ENCODE measurements at regions of chr15 and their contacts with region 1.

Region 1: DNA sequence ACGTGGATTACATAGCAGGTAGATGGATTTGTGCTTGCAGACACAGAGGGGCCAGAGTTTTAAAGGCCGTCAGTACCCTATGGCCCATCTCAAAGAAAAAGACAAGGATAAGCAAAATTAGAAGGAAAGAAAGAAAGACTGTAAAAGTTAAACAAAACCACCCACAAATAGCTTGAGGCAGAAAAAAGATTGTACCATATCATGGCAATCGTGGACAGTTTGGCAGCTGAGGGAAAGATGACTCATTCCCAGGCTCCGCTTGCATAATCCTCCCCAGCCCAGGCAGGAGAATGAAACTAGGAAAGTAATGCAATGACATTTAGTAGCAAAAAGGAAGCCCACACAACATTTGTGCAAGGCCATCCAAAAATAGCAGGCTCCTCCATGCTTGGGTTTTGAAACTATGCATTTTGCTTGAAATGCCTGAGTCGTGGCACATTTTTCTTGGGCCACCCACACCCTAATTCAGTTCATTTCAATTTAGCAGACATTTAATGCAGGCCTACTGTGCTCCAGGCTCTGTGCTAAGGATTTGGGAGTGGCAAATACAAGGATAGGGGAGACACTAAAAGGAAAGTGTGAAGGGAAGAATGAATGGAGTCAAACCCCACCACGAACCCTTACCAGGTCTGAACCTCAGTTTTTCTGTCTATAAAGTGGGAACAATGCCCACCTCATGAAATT is 40.9 kb upstream of the SMAD3 start:
- DNase-seq: peak; percentile 92
- H3K4me3 ChIP-seq: no peak overlapping the region
- H3K27ac ChIP-seq: peak overlapping the region; percentile 77
- H3K4me1 ChIP-seq: peaks cover 38% of the 10 kb centered on the region
- H3K27me3 ChIP-seq: no peaks in the 10 kb centered on the region
- CTCF ChIP-seq: no peak
- POLR2A ChIP-seq: no peak

Region 2: GRCh38 chr15:67013696-67014095 is 10.8 kb before region 1 on chr15:
- CTCF ChIA-PET with region 1: interaction called, 6 read pairs
- POLR2A ChIA-PET with region 1: no interaction called
- dilution Hi-C with region 1: no loop called
- intact Hi-C with region 1: loop called (anchors 1 kb)
- DNase-seq: peak; percentile 97
- H3K4me3 ChIP-seq: no peak overlapping the region
- H3K27ac ChIP-seq: peak overlapping the region; percentile 73
- H3K4me1 ChIP-seq: peaks cover 21% of the 10 kb centered on the region
- H3K27me3 ChIP-seq: no peaks in the 10 kb centered on the region
- CTCF ChIP-seq: no peak
- POLR2A ChIP-seq: peak; percentile 60

Region 3: DNA sequence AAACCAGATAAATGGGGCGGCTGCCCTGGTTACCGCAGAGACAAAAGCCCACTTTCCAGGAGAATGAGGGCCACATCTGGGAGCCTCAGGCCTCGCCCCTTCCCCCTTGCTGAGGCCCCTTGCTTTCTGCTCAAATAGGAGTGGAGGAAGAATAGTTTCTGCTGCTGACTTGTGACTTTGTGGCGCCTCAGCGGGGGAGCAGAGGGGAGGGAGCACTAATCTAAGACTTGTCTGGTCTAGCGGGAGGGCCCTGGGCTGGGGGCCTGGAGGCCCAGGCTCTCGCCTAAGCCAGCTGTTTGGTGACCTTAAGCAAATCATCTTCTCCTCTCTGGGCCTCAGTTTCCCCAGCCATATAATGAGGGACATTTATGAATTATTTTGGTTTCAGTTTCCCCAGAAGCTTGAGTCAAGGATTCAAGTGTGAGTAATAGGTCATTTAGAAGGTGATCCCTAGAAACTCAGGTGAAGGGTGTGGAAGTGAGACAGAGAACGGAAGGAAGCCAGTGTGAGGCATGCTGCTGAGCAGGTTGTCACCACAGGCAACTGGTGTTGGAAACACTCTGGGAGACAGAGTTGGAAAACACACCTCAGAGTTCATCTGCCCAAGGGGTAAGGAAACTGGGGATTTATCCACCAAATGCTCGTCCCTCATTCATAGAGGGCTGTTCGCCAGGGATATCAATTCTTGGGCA is 15.1 kb after region 1 on chr15:
- CTCF ChIA-PET with region 1: interaction called, 5 read pairs
- POLR2A ChIA-PET with region 1: no interaction called
- dilution Hi-C with region 1: no loop called
- intact Hi-C with region 1: loop called (anchors 2 kb)
- DNase-seq: no peak
- H3K4me3 ChIP-seq: no peak overlapping the region
- H3K27ac ChIP-seq: no peak overlapping the region
- H3K4me1 ChIP-seq: peaks cover 23% of the 10 kb centered on the region
- H3K27me3 ChIP-seq: no peaks in the 10 kb centered on the region
- CTCF ChIP-seq: no peak
- POLR2A ChIP-seq: no peak

Region 4: GRCh38 chr15:67048281-67049279 is 24.1 kb after region 1 on chr15:
- CTCF ChIA-PET with region 1: interaction called, 8 read pairs
- POLR2A ChIA-PET with region 1: no interaction called
- dilution Hi-C with region 1: no loop called
- intact Hi-C with region 1: loop called (anchors 2 kb)
- DNase-seq: peak; percentile 68
- H3K4me3 ChIP-seq: no peak overlapping the region
- H3K27ac ChIP-seq: peak overlapping the region; percentile 93
- H3K4me1 ChIP-seq: peaks cover 29% of the 10 kb centered on the region
- H3K27me3 ChIP-seq: no peaks in the 10 kb centered on the region
- CTCF ChIP-seq: no peak
- POLR2A ChIP-seq: no peak

Region 5: DNA sequence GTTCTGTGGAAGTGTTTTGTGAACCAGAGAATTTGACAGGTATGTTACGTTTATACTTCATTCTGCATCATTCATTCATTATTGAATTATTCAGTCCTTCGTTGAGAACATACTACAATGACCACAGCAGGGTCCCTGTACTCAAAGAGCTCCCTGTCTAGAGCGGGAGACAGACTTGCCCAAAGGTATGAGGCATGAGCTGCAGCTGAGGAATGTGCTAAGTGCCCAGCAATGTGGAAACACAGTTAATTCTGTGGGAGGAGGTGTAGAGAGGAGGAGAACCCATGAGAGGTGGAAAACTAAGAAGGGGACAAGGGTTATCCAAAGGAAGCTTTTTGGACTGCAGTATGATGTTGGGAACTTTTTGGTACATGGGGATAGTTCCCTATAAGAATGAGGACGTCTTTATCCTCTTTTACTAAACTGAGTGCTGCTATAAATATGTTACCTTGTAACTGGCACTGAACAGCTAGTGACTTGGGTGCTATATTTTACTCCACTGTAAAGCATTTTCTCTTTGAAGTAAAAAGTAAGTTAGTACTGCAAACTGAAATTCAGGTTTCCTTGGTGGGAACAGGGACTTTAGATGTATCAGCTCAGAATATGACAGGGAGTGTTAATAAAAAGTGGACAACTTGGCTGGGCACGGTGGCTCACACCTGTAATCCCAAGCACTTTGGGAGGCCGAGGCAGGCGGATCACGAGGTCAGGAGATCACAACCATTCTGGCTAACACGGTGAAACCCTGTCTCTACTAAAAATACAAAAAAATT is 46.6 kb after region 1 on chr15:
- CTCF ChIA-PET with region 1: no interaction called
- POLR2A ChIA-PET with region 1: no interaction called
- dilution Hi-C with region 1: no loop called
- intact Hi-C with region 1: no loop called
- DNase-seq: no peak
- H3K4me3 ChIP-seq: no peak overlapping the region
- H3K27ac ChIP-seq: no peak overlapping the region
- H3K4me1 ChIP-seq: peaks cover 59% of the 10 kb centered on the region
- H3K27me3 ChIP-seq: no peaks in the 10 kb centered on the region
- CTCF ChIP-seq: no peak
- POLR2A ChIP-seq: no peak

Measured in endothelial cell of umbilical vein (primary cell).